ENCODE measurements at regions of chr5 and their contacts with region 1.

Region 1: GRCh38 chr5:671459-672328 is 21.5 kb downstream of the TPPP start:
- DNase-seq: peak; percentile 57 to 84 (median 72)
- H3K4me3 ChIP-seq: no peak overlapping the region
- H3K27ac ChIP-seq: no peak overlapping the region
- H3K4me1 ChIP-seq: peaks cover 0 to 26% of the 10 kb centered on the region in 2 donors
- H3K27me3 ChIP-seq: no peaks in the 10 kb centered on the region
- CTCF ChIP-seq: peak; percentile 71 to 92 (median 88)
- POLR2A ChIP-seq: peak in 1 of 2 donors; percentile 6

Region 2: GRCh38 chr5:386432-387341 is 285.0 kb before region 1 on chr5:
- intact Hi-C with region 1: no loop called
- DNase-seq: peak in 2 of 7 donors; percentile 6 to 17
- H3K4me3 ChIP-seq: no peak overlapping the region
- H3K27ac ChIP-seq: no peak overlapping the region
- H3K4me1 ChIP-seq: no peaks in the 10 kb centered on the region
- H3K27me3 ChIP-seq: no peaks in the 10 kb centered on the region
- CTCF ChIP-seq: no peak
- POLR2A ChIP-seq: no peak

Region 3: GRCh38 chr5:801472-801871 is 129.8 kb after region 1 on chr5:
- intact Hi-C with region 1: loop called in 1 of 2 experiments (anchors 10 kb)
- DNase-seq: no peak
- H3K4me3 ChIP-seq: no peak overlapping the region
- H3K27ac ChIP-seq: no peak overlapping the region
- H3K4me1 ChIP-seq: no peaks in the 10 kb centered on the region
- H3K27me3 ChIP-seq: no peaks in the 10 kb centered on the region
- CTCF ChIP-seq: no peak
- POLR2A ChIP-seq: no peak

Region 4: GRCh38 chr5:900781-901180 is 229.1 kb after region 1 on chr5:
- intact Hi-C with region 1: loop called (anchors 2 to 5 kb)
- DNase-seq: no peak
- H3K4me3 ChIP-seq: no peak overlapping the region
- H3K27ac ChIP-seq: no peak overlapping the region
- H3K4me1 ChIP-seq: no peaks in the 10 kb centered on the region
- H3K27me3 ChIP-seq: no peaks in the 10 kb centered on the region
- CTCF ChIP-seq: no peak
- POLR2A ChIP-seq: no peak

Region 5: DNA sequence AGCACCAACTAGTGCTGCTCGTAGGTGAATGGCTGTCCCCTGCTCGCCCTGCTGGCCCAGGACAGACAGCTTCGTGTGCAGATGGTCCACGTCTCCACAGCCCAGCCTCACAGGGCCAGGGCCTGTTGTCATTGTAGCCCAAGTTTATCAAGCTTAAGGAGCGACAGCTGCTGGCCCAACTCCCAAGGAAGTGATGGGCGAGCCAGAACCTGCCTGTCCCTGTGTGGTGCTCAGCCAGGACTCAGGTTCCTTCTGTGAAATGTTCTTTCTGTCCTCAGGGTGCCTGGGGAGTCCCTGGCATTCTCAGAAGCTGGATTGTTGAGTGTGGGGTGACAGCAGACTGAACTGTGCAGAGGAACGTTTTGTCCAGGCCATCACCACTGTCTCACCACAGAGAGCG is 237.4 kb after region 1 on chr5:
- intact Hi-C with region 1: loop called in 1 of 2 experiments (anchors 5 kb)
- DNase-seq: peak in 1 of 7 donors; percentile 34
- H3K4me3 ChIP-seq: no peak overlapping the region
- H3K27ac ChIP-seq: no peak overlapping the region
- H3K4me1 ChIP-seq: no peaks in the 10 kb centered on the region
- H3K27me3 ChIP-seq: no peaks in the 10 kb centered on the region
- CTCF ChIP-seq: no peak
- POLR2A ChIP-seq: no peak

Measured in adrenal gland (tissue), 19 donors.